CD4-positive, alpha-beta memory T cell (primary cell): ENCODE measurements at regions of chr4 and their contacts with region 1.

Region 1: GRCh38 chr4:180675359-180675650 is 1567.9 kb upstream of the TENM3 start:
- DNase-seq: no peak
- H3K4me3 ChIP-seq: no peak overlapping the region
- H3K4me3 Mint-ChIP-seq: no peak overlapping the region
- H3K27ac ChIP-seq: no peak overlapping the region
- H3K27ac Mint-ChIP-seq: no peak overlapping the region
- H3K4me1 ChIP-seq: no peaks in the 10 kb centered on the region
- H3K4me1 Mint-ChIP-seq: no peaks in the 10 kb centered on the region
- H3K27me3 ChIP-seq: no peaks in the 10 kb centered on the region
- H3K27me3 Mint-ChIP-seq: no peaks in the 10 kb centered on the region

Region 2: DNA sequence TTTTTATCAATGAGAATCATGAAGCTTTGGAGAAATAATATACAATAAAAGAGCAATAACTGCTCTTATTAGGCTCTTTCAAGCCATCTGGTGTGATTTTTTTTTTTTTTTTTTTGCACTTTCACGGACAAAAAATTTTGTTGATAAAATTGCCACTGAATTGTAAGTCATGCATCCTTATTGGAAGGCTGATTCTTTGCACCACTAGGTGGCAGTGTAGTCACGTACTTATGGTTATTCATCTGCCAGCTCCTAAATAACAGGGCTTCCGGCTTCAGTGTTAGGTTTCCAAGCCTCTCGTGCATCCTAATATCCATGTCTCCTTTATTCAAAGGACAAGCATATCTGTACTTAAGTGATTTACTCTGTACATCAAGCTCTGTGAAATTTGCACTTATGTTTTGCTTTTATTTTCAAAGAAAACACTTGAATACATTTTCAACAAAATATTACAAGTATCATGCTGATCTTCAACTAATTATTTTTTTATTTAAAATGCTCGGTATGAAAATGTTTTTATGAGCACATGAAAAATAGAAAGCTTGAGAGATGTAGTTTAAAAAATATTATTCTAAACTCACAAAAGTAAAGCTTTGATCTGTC is 10.4 kb before region 1 on chr4:
- CTCF ChIA-PET with region 1: interaction called, 17 read pairs
- POLR2A ChIA-PET with region 1: no interaction called
- intact Hi-C with region 1: no loop called
- DNase-seq: peak in 4 of 5 donors; percentile 19 to 30 (median 22)
- H3K4me3 ChIP-seq: no peak overlapping the region
- H3K4me3 Mint-ChIP-seq: no peak overlapping the region
- H3K27ac ChIP-seq: no peak overlapping the region
- H3K27ac Mint-ChIP-seq: no peak overlapping the region
- H3K4me1 ChIP-seq: no peaks in the 10 kb centered on the region
- H3K4me1 Mint-ChIP-seq: no peaks in the 10 kb centered on the region
- H3K27me3 ChIP-seq: no peaks in the 10 kb centered on the region
- H3K27me3 Mint-ChIP-seq: no peaks in the 10 kb centered on the region

Region 3: DNA sequence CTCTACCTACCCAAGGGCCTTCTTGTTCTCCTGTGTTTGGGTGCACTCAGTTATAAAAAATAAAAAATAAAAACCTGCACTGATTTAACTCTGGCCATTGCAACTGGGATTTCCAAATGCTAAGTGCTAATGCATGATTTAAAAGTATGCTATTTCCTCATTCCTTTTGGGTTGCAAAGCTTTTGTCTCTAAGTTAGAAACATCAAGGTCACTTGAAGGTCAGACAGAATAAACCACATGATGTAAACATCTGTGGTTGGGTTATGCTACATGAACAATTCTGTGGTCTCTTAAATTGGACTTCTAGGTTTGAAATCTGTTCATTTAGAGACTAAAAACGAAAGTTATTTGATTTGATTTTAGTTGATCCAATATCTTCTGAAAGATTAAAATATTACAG is 20.5 kb after region 1 on chr4:
- CTCF ChIA-PET with region 1: no interaction called
- POLR2A ChIA-PET with region 1: no interaction called
- intact Hi-C with region 1: no loop called
- DNase-seq: no peak
- H3K4me3 ChIP-seq: no peak overlapping the region
- H3K4me3 Mint-ChIP-seq: no peak overlapping the region
- H3K27ac ChIP-seq: no peak overlapping the region
- H3K27ac Mint-ChIP-seq: no peak overlapping the region
- H3K4me1 ChIP-seq: no peaks in the 10 kb centered on the region
- H3K4me1 Mint-ChIP-seq: no peaks in the 10 kb centered on the region
- H3K27me3 ChIP-seq: no peaks in the 10 kb centered on the region
- H3K27me3 Mint-ChIP-seq: no peaks in the 10 kb centered on the region

Region 4: GRCh38 chr4:180999217-180999616 is 323.9 kb after region 1 on chr4:
- CTCF ChIA-PET with region 1: no interaction called
- POLR2A ChIA-PET with region 1: no interaction called
- intact Hi-C with region 1: no loop called
- DNase-seq: no peak
- H3K4me3 ChIP-seq: no peak overlapping the region
- H3K4me3 Mint-ChIP-seq: no peak overlapping the region
- H3K27ac ChIP-seq: no peak overlapping the region
- H3K27ac Mint-ChIP-seq: no peak overlapping the region
- H3K4me1 ChIP-seq: no peaks in the 10 kb centered on the region
- H3K4me1 Mint-ChIP-seq: no peaks in the 10 kb centered on the region
- H3K27me3 ChIP-seq: no peaks in the 10 kb centered on the region
- H3K27me3 Mint-ChIP-seq: no peaks in the 10 kb centered on the region